Pancreas (tissue), 10 donors: ENCODE measurements at regions of chr19 and their contacts with region 1.

Region 1: GRCh38 chr19:21680671-21681070 is 86.7 kb downstream of the ZNF100 start:
- DNase-seq: no peak
- ATAC-seq: no peak
- H3K4me3 ChIP-seq: no peak overlapping the region
- H3K27ac ChIP-seq: no peak overlapping the region
- H3K4me1 ChIP-seq: no peaks in the 10 kb centered on the region
- H3K27me3 ChIP-seq: no peaks in the 10 kb centered on the region
- CTCF ChIP-seq: no peak

Region 2: GRCh38 chr19:21492947-21493906 is 187.4 kb before region 1 on chr19:
- intact Hi-C with region 1: loop called in 1 of 3 experiments (anchors 10 kb)
- DNase-seq: no peak
- ATAC-seq: peak in 3 of 4 donors; percentile 25 to 77 (median 42)
- H3K4me3 ChIP-seq: no peak overlapping the region
- H3K27ac ChIP-seq: no peak overlapping the region
- H3K4me1 ChIP-seq: no peaks in the 10 kb centered on the region
- H3K27me3 ChIP-seq: no peaks in the 10 kb centered on the region
- CTCF ChIP-seq: no peak

Region 3: GRCh38 chr19:21891081-21891480 is 210.4 kb after region 1 on chr19:
- intact Hi-C with region 1: no loop called
- DNase-seq: no peak
- ATAC-seq: no peak
- H3K4me3 ChIP-seq: no peak overlapping the region
- H3K27ac ChIP-seq: no peak overlapping the region
- H3K4me1 ChIP-seq: no peaks in the 10 kb centered on the region
- H3K27me3 ChIP-seq: no peaks in the 10 kb centered on the region
- CTCF ChIP-seq: no peak